HEK293 (cell line): ENCODE measurements at regions of chr10 and their contacts with region 1.

Region 1: DNA sequence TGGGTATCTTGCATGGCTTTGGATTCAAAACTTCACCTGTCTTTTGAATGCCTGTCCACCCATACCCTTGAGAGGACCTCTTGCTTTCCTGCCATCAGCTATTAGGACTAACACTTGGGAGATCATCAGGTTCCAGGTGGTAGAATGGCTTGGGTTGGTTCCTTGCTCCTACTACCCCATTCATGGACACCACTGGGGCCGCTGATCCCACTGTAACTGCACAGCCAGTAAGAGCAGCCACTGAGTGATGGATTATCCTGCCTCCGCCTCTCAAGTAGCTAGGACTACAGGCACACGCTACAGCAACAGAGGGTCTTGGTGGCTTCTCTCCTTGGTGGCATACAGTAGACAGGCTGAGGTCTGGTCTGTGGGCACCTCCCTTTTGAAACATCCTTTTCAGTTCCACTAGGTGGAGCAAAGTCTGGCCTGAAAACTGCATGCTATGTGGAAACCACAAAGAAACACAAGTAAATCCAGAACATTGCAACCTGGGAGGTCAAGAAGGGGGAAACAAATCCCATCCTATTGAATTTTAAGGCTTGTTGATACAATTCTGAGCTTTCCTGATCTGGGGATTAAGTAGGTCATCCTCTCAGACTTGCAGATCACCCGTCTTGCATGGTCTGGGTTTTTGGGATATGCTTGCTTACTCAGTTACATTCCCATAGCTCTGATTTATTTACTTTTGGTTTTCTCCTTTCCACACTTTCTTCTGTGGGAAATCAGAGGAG is 9.4 kb downstream of the WBP1L start:
- H3K4me3 ChIP-seq: no peak overlapping the region
- H3K27ac ChIP-seq: no peak overlapping the region
- H3K4me1 ChIP-seq: no peaks in the 10 kb centered on the region
- CTCF ChIP-seq: peak; percentile 45; the same call in 1 of the 2 replicates

Region 2: DNA sequence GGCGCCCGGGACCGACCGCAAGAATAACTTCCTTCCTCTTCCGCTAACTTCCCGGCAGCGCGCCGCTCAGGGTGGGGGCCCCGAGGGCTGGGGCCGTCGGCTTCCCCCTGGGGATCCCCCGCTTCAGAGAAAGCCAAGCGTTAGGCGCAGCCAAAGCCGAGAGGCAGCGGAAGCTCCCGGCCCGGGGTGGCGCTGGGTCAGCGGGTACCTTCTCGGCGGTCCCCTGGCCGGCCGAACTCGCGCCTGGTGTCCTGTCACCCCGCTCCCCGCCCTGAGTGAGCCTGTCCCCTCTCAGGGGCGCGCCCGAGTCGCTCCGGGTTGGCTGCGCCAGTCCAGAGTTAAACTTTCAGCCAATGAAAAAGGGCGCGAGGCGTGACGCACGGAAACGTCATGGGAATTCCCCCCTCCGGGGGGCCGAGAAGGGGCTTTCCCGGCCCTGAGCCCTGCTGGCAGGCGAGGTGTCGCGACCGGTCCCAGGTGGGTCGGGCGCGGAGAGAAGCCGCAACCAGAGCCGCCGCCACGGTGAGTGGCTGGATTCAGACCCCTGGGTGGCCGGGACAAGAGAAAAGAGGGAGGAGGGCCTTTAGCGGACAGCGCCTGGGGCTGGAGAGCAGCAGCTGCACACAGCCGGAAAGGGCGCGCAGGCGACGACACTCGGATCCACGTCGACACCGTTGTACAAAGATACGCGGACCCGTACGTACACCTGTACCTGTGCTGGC is 358.9 kb before region 1 on chr10:
- CTCF ChIA-PET with region 1: no interaction called
- POLR2A ChIA-PET with region 1: no interaction called
- H3K4me3 ChIP-seq: peak overlapping the region; percentile 58
- H3K27ac ChIP-seq: no peak overlapping the region; the same call in 1 of the 2 replicates
- H3K4me1 ChIP-seq: peaks cover 5% of the 10 kb centered on the region; the same call in 1 of the 2 replicates
- CTCF ChIP-seq: peak; percentile 94

Region 3: DNA sequence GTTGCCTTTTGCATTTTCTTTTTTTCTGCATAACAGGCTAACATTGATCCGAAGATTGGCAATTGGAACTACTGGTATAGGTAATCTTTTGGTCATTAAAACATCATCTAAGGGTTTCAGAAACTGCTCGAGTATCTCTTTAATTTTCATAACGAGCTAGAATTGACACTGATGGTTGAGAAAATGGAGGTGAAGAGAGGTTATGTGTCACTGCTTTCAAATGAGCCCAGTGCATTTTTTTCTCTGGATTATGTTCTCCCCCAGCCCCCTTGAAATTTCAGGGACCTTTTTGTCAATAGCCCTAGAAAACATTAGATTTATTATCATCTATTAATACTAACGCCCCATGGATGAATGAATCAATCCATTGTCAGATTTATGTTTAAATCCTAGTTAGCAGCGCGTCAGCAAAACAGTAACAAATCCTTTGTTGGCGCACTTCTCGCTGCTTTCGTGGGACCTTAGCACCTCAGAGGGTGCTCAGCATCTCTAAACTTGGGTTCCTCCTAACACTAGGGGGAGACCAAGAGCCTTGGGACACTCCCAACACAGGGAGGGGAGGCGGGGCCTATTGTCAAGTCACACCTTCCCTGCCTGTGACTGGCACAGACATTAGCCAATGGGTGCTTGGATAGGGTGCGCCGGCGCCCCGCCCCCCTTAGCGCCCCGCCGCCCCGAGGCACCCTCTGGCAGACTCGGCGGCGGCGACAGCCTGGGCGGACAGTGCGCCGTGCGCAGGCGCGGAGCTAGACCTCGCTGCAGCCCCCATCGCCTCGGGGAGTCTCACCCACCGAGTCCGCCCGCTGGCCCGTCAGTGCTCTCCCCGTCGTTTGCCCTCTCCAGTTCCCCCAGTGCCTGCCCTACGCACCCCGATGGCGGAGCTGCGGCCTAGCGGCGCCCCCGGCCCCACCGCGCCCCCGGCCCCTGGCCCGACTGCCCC is 249.5 kb before region 1 on chr10 and contains the start of gene SUFU:
- CTCF ChIA-PET with region 1: no interaction called
- POLR2A ChIA-PET with region 1: no interaction called
- H3K4me3 ChIP-seq: peak within 1 kb of the TSS; percentile 93
- H3K27ac ChIP-seq: peak within 1 kb of the TSS; percentile 49; the same call in 1 of the 2 replicates
- H3K4me1 ChIP-seq: peaks cover 5% of the 10 kb centered on the region
- CTCF ChIP-seq: peak; percentile 95

Region 4: GRCh38 chr10:102764389-102765178 is 11.5 kb after region 1 on chr10:
- CTCF ChIA-PET with region 1: interaction called, 47 read pairs
- POLR2A ChIA-PET with region 1: interaction called, 6 read pairs
- H3K4me3 ChIP-seq: no peak overlapping the region
- H3K27ac ChIP-seq: no peak overlapping the region
- H3K4me1 ChIP-seq: peaks cover 20% of the 10 kb centered on the region
- CTCF ChIP-seq: no peak

Region 5: GRCh38 chr10:102776779-102777456 is 23.8 kb after region 1 on chr10:
- CTCF ChIA-PET with region 1: interaction called, 22 read pairs
- POLR2A ChIA-PET with region 1: interaction called, 3 read pairs
- H3K4me3 ChIP-seq: no peak overlapping the region
- H3K27ac ChIP-seq: peak overlapping the region; percentile 2; the same call in 1 of the 2 replicates
- H3K4me1 ChIP-seq: peaks cover 17% of the 10 kb centered on the region
- CTCF ChIP-seq: no peak

Region 6: GRCh38 chr10:102835007-102835482 is 81.9 kb after region 1 on chr10:
- CTCF ChIA-PET with region 1: interaction called, 16 read pairs
- POLR2A ChIA-PET with region 1: no interaction called
- H3K4me3 ChIP-seq: no peak overlapping the region
- H3K27ac ChIP-seq: no peak overlapping the region
- H3K4me1 ChIP-seq: peaks cover 6% of the 10 kb centered on the region; the same call in 1 of the 2 replicates
- CTCF ChIP-seq: peak; percentile 94

Region 7: DNA sequence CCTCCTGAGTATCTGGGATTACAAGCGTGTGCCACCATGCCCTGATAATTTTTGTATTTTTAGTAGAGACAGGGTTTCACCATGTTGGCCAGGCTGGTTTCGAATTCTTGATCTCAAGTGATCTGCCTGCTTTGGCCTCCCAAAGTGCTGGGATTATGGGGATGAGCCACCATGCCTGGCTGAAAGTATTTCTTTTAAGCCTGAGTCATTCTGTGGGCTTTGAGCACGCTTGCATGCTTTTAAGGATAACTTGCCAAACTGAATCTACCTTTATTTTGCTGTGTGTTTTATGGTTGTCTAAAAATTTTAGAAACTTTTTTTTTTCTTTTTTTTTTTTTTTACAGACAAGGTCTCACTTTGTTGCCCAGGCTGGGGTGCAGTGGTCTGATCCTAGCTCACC is 198.2 kb after region 1 on chr10:
- CTCF ChIA-PET with region 1: no interaction called
- POLR2A ChIA-PET with region 1: no interaction called
- H3K4me3 ChIP-seq: no peak overlapping the region
- H3K27ac ChIP-seq: no peak overlapping the region
- H3K4me1 ChIP-seq: no peaks in the 10 kb centered on the region
- CTCF ChIP-seq: no peak